ENCODE measurements at regions of chr7 and their contacts with region 1.

Region 1: GRCh38 chr7:32937344-32938174 is 19.7 kb upstream of the FKBP9 start:
- DNase-seq: no peak
- H3K4me3 ChIP-seq: no peak overlapping the region
- H3K4me3 Mint-ChIP-seq: no peak overlapping the region
- H3K27ac ChIP-seq: no peak overlapping the region
- H3K27ac Mint-ChIP-seq: no peak overlapping the region
- H3K4me1 ChIP-seq: peaks cover 11 to 15% of the 10 kb centered on the region in 2 donors
- H3K4me1 Mint-ChIP-seq: peaks cover 21% of the 10 kb centered on the region
- H3K27me3 ChIP-seq: no peaks in the 10 kb centered on the region
- H3K27me3 Mint-ChIP-seq: peaks cover 0 to 4% (median 0%) of the 10 kb centered on the region in 3 donors
- CTCF ChIP-seq: no peak

Region 2: GRCh38 chr7:32858648-32859047 is 78.9 kb before region 1 on chr7:
- intact Hi-C with region 1: loop called in 1 of 2 experiments (anchors 10 kb)
- DNase-seq: no peak
- H3K4me3 ChIP-seq: no peak overlapping the region
- H3K4me3 Mint-ChIP-seq: no peak overlapping the region
- H3K27ac ChIP-seq: no peak overlapping the region
- H3K27ac Mint-ChIP-seq: no peak overlapping the region
- H3K4me1 ChIP-seq: no peaks in the 10 kb centered on the region
- H3K4me1 Mint-ChIP-seq: no peaks in the 10 kb centered on the region
- H3K27me3 ChIP-seq: no peaks in the 10 kb centered on the region
- H3K27me3 Mint-ChIP-seq: peaks cover 0 to 7% (median 6%) of the 10 kb centered on the region in 3 donors
- CTCF ChIP-seq: no peak

Region 3: GRCh38 chr7:32869716-32870115 is 67.8 kb before region 1 on chr7:
- intact Hi-C with region 1: no loop called
- DNase-seq: no peak
- H3K4me3 ChIP-seq: no peak overlapping the region
- H3K4me3 Mint-ChIP-seq: no peak overlapping the region
- H3K27ac ChIP-seq: no peak overlapping the region
- H3K27ac Mint-ChIP-seq: no peak overlapping the region
- H3K4me1 ChIP-seq: no peaks in the 10 kb centered on the region
- H3K4me1 Mint-ChIP-seq: peaks cover 2% of the 10 kb centered on the region
- H3K27me3 ChIP-seq: no peaks in the 10 kb centered on the region
- H3K27me3 Mint-ChIP-seq: no peaks in the 10 kb centered on the region
- CTCF ChIP-seq: no peak

Measured in CD14-positive monocyte (primary cell).